ENCODE measurements at regions of chr9 and their contacts with region 1.

Region 1: GRCh38 chr9:127537792-127538191 is 74.3 kb upstream of the STXBP1 start:
- DNase-seq: peak in 1 of 9 experiments; percentile 0
- ATAC-seq: no peak
- H3K4me3 ChIP-seq: no peak overlapping the region
- H3K4me3 Mint-ChIP-seq: no peak overlapping the region
- H3K27ac ChIP-seq: no peak overlapping the region
- H3K27ac Mint-ChIP-seq: no peak overlapping the region
- H3K4me1 ChIP-seq: no peaks in the 10 kb centered on the region
- H3K4me1 Mint-ChIP-seq: no peaks in the 10 kb centered on the region
- H3K27me3 ChIP-seq: no peaks in the 10 kb centered on the region
- H3K27me3 Mint-ChIP-seq: no peaks in the 10 kb centered on the region
- CTCF ChIP-seq: no peak

Region 2: GRCh38 chr9:127637322-127637847 is 99.6 kb after region 1 on chr9:
- CTCF ChIA-PET with region 1: no interaction called
- POLR2A ChIA-PET with region 1: no interaction called
- intact Hi-C with region 1: loop called in 1 of 2 experiments (anchors 10 kb)
- DNase-seq: no peak
- ATAC-seq: no peak
- H3K4me3 ChIP-seq: no peak overlapping the region
- H3K4me3 Mint-ChIP-seq: no peak overlapping the region
- H3K27ac ChIP-seq: no peak overlapping the region
- H3K27ac Mint-ChIP-seq: no peak overlapping the region
- H3K4me1 ChIP-seq: peaks cover 7% of the 10 kb centered on the region
- H3K4me1 Mint-ChIP-seq: peaks cover 13% of the 10 kb centered on the region
- H3K27me3 ChIP-seq: no peaks in the 10 kb centered on the region
- H3K27me3 Mint-ChIP-seq: peaks cover 2% of the 10 kb centered on the region
- CTCF ChIP-seq: no peak